Esophagus squamous epithelium (tissue), 5 donors: ENCODE measurements at regions of chr3 and their contacts with region 1.

Region 1: DNA sequence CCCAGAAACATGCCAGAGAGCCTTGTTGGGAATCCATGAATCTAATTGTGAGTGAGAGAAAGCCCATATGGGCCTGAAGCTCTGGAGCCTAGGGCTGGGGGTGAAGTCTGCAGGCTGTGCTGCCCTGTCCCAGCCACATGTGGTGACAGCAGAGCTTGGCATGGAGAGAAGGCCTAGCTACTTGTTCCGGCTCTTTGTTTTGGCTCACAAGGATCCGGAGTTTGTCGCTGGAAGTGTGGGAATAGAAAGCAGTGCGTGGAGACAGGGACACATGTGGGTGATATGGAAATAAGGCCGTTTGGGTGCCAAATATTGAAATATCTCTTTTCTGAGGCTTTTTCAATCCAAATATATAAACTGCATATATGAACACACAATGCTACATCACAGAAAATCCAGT is 78.2 kb downstream of the CLSTN2 start:
- DNase-seq: no peak
- H3K4me3 ChIP-seq: no peak overlapping the region
- H3K27ac ChIP-seq: no peak overlapping the region
- H3K4me1 ChIP-seq: no peaks in the 10 kb centered on the region
- H3K27me3 ChIP-seq: no peaks in the 10 kb centered on the region
- CTCF ChIP-seq: no peak
- POLR2A ChIP-seq: no peak

Region 2: GRCh38 chr3:139728414-139728813 is 284.8 kb before region 1 on chr3:
- intact Hi-C with region 1: loop called (anchors 5 kb)
- DNase-seq: no peak
- H3K4me3 ChIP-seq: no peak overlapping the region
- H3K27ac ChIP-seq: no peak overlapping the region
- H3K4me1 ChIP-seq: no peaks in the 10 kb centered on the region
- H3K27me3 ChIP-seq: peaks cover 0 to under 1% (median 0%) of the 10 kb centered on the region in 4 donors
- CTCF ChIP-seq: no peak
- POLR2A ChIP-seq: no peak

Region 3: DNA sequence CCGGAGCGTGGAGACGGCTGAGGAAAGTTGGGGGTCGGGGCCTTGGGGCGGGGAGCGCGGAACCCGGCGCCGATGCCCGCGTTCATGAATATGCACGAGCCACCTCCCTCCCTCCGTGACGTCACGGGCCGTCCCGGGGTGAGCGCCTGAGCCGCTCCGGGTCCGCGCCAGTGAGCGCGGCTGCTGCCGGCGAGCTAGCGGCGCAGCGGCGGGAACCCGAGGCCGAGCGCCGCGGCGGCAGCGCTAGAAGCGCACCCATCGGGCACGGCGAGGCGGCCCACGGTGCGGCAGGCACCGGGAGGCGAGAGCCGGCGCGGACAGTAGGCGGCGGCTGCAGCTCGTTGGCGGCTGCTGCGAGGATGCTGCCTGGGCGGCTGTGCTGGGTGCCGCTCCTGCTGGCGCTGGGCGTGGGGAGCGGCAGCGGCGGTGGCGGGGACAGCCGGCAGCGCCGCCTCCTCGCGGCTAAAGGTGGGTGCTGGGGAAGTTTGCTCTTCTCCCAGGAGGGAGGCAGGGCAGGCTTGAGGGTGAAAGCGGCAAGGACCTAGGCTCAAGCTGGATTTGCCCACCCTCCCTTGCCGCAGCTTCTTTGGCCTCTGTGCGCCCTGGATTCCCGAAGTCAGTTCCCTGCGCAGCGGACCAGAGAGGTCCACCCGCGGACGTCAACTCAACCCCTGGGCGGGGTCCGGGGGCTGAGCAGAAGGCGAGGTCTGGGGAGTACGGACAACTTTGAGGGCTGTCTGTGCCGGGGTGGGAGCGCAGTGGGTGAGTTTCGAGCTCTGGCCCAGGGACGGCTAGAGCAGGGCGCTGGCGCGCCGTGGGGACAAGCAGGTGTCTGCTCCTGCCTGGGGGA is 78.0 kb before region 1 on chr3 and contains the start of gene CLSTN2:
- intact Hi-C with region 1: no loop called
- DNase-seq: no peak
- H3K4me3 ChIP-seq: peak within 1 kb of the TSS; percentile 37 to 69 (median 46)
- H3K27ac ChIP-seq: peak within 1 kb of the TSS in 1 of 4 donors; percentile 52
- H3K4me1 ChIP-seq: peaks cover 13 to 25% (median 14%) of the 10 kb centered on the region in 3 donors
- H3K27me3 ChIP-seq: peaks cover 0 to 66% (median 4%) of the 10 kb centered on the region in 4 donors
- CTCF ChIP-seq: peak in 2 of 6 experiments; percentile 14 to 32
- POLR2A ChIP-seq: peak in 1 of 4 donors; percentile 32
- total RNA-seq, gene CLSTN2: 0.53 to 5.0 (median 3.1) TPM

Region 4: GRCh38 chr3:141426404-141427034 is 1413.3 kb after region 1 on chr3:
- intact Hi-C with region 1: no loop called
- DNase-seq: no peak
- H3K4me3 ChIP-seq: no peak overlapping the region
- H3K27ac ChIP-seq: peak overlapping the region in 3 of 4 donors; percentile 67 to 70 (median 68)
- H3K4me1 ChIP-seq: peaks cover 10 to 78% (median 14%) of the 10 kb centered on the region in 3 donors
- H3K27me3 ChIP-seq: no peaks in the 10 kb centered on the region
- CTCF ChIP-seq: no peak
- POLR2A ChIP-seq: no peak